BJ (cell line): ENCODE measurements at regions of chr1 and their contacts with region 1.

Region 1: GRCh38 chr1:202713110-202713509 is 2.9 kb upstream of the SYT2 start:
- DNase-seq: no peak
- H3K4me3 ChIP-seq: no peak overlapping the region
- H3K27me3 ChIP-seq: peaks cover 48% of the 10 kb centered on the region
- CTCF ChIP-seq: no peak

Region 2: GRCh38 chr1:202343652-202344349 is 369.3 kb before region 1 on chr1:
- CTCF ChIA-PET with region 1: interaction called, 24 read pairs
- POLR2A ChIA-PET with region 1: no interaction called
- DNase-seq: no peak
- H3K4me3 ChIP-seq: no peak overlapping the region
- H3K27me3 ChIP-seq: no peaks in the 10 kb centered on the region
- CTCF ChIP-seq: peak; percentile 64

Region 3: DNA sequence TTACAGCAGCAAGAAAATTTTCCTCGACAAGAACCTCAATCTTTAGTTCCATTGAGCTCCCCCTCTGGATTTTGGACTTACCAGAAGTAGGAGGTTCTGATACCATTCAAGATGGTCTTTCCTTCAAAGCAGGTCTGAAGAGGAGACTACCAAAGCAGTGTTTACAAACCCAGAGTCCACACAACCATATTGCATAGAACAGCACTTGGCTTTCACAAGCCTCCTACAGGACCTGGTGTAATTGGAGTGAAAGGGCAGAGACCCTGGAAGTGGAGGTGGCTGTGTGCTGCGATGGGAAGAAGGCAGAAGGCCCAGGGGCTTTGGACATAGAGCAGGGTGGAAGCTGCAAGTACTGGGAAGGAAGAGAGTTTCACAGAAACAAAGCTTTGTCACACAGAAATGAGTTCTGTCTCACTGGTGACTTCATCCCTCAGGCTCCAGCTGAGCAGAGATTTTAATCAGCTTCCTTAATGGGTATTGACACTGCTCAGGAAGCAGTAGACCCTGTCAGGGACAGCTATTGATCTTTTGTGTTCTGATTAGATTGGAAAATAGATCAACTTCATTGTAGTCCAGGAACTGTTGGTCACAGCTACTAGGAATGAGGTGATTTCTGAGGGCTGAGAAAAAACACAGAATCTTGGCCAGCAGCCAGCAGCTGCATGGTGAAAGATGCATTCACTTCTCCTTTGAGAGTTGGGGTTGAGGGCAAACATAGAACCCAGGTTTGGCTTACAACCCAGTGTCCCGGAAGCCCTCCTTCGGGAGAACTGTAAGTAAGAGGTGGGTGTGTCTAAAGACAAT is 126.9 kb before region 1 on chr1:
- CTCF ChIA-PET with region 1: no interaction called
- POLR2A ChIA-PET with region 1: no interaction called
- DNase-seq: no peak
- H3K4me3 ChIP-seq: no peak overlapping the region
- H3K27me3 ChIP-seq: no peaks in the 10 kb centered on the region
- CTCF ChIP-seq: no peak